ENCODE measurements at regions of chr16 and their contacts with region 1.

Region 1: DNA sequence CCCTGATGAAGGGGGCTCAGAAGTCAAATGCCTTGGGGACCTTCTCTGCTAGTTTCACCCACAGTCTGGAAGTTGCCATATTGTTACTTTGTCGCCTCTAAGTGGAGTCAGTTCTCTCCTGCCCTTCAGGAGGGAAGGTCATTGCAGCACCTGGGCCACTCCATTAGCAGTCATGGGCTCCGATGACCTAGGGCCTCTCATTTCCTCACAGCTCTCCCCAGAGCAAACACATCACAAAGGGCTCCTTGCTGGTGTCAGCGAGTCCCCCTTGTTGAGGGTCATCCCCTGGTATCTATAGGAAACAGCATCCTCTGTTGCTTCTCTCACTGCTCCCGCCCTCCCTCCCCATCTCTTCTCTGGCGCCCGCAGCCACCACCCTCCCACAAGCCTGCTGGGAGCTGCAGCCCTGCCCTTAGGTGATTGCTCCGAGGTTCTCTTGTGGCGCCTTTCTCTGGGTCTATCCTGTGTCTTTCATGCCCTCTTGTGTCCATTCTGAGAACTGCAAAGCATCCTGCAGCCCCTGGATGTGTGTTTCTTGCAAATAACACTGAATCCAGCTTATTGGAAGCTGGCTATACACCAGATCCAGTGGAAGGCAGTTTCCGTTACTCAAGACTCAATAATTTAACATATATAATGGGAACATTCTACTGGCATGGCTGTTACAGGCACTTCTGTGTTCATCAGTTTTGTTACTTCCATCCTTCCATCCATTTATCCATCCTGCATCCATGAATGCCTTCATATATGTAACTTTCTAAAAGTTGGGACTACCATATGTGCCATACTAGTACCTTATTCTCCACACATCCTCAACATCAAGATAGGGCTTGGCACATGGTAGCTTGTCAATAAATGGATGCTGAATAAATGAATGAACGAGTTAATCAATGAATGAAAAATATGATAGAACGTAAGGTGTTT is 21.2 kb downstream of the PDILT start:
- DNase-seq: peak; percentile 30
- H3K4me3 ChIP-seq: no peak overlapping the region
- H3K27ac ChIP-seq: no peak overlapping the region
- H3K27me3 ChIP-seq: no peaks in the 10 kb centered on the region
- CTCF ChIP-seq: peak; percentile 83

Region 2: DNA sequence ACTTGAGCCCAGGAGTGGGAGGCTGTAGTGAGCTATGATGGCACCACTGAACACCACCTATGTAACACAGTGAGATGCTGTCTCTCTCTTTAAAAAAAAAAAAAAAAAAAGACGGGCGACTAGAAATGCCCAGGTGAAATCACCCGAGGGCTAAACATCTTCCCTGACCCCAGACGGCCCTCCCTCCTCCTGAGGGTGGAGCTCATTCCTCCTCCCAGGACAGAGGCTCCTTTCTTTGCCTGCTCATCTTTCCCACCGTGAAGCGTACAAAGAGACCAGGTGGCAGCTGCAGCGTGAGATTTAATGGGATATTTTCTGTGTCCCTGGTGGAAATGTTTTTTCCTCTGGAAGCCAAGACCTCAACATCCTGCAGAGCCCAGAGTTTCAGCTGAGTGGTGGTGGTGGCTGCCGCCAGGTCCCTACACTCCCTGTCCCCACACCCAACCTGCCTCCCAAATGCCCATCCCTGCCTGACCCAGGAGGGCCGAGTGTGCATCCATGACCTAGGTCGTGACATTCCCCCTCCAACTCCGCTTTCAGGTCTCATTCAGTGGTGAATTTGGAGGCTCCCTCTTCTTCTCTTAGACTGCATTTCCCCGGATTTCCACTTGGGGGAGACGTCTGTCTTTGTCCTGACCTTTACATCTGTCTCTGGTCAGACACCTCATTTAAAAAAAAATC is 484.3 kb before region 1 on chr16:
- CTCF ChIA-PET with region 1: interaction called, 405 read pairs
- POLR2A ChIA-PET with region 1: no interaction called
- DNase-seq: no peak
- H3K4me3 ChIP-seq: no peak overlapping the region
- H3K27ac ChIP-seq: no peak overlapping the region
- H3K27me3 ChIP-seq: peaks cover 3% of the 10 kb centered on the region
- CTCF ChIP-seq: peak; percentile 87

Region 3: DNA sequence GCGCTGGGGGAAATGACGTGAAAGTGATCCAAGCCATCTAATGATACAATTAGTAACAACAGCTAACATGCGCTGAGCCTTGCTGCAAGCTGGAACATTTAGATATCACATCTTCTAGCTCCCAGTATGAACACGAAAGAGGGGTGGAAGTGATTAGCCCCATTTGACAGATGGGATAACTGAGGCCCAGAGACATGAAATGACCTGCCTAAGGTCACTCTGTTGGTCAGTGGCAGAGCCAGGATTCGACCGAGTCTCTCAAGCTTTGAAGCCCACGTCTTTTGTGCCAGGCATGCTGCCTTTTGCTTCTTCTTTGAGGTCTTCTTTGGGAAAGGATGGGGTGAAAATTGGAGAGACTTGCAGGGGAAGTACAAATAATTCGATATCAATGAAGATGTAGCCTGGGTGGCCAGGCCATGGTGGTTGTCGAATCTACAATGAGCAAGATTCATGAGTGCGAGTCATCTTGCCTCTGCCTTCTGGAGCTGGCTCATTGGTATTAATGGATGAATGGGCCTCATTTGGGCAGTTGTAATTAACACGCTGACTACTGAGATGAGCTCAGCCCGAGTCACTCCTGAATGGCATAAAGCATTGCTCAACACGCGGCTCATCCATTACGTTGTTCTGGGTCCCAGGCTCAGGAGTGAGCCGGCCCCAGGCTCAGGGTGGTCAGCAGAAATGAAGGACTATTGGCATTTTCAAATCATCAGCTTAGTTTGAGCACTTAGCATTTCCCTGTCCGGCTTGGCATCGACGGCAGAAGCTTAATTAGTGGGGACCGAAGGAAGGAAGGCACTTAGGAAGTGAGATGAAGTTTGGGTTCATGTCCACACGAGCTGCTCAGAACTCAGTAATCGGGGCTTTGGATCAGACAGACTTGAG is 470.7 kb before region 1 on chr16:
- CTCF ChIA-PET with region 1: interaction called, 405 read pairs
- POLR2A ChIA-PET with region 1: no interaction called
- DNase-seq: no peak
- H3K4me3 ChIP-seq: no peak overlapping the region
- H3K27ac ChIP-seq: no peak overlapping the region
- H3K27me3 ChIP-seq: no peaks in the 10 kb centered on the region
- CTCF ChIP-seq: no peak

Region 4: DNA sequence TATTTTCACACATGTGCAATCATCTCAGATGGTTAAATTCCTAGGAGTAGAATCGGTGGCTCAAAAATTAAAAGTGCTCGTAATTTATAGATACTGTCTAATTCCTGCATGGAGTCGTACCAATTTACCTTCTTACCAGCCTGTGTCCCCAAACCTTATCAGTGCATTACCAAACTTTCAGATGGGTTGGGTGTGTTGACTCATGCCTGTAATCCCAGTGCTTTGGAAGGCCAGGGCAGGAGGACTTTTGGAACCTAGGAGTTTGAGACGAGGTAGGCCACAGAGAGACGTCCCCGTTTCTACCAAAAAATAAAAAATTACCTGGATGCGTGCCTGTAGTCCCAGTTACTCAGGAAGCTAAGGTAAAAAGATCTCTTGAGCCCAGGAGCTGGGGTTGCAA is 464.2 kb before region 1 on chr16:
- CTCF ChIA-PET with region 1: interaction called, 11 read pairs
- POLR2A ChIA-PET with region 1: no interaction called
- DNase-seq: no peak
- H3K4me3 ChIP-seq: no peak overlapping the region
- H3K27ac ChIP-seq: no peak overlapping the region
- H3K27me3 ChIP-seq: no peaks in the 10 kb centered on the region
- CTCF ChIP-seq: no peak

Region 5: DNA sequence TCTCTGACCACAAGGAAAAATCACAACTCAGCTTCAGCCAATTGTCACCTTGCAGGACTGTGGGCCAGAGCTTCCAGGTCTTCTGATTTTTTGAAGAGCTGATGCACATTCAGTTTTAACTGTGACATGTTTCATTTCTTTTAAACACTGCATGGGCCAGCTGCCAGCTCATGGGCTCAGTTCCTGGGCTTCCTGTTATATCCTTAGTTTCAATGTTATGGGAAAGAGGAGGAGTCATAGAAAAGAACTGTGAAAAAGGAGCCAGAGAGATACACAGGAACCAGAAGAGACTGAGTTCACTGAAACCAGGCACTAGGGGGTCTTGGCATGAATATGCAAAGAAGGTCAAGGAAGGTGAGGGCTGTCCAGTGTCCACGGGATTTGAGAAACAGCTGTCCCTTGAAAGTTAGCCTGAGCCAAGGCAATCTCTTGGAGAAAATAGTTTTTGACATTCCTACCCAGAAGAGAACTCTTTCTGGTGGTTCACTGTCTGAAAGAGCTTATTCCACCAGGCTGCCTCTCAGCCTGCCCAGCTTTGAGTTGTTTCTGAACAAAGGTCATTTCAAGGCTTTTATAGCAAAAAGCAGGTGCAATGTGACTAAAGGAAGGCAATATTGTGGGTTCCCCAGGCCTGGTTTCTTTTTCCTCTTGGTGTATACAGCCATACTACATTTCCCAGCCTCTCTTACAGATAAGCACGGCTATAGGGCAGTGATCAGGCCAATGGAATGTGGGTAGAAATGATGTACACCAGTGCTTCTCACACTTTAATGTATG is 10.6 kb after region 1 on chr16:
- CTCF ChIA-PET with region 1: interaction called, 13 read pairs
- POLR2A ChIA-PET with region 1: no interaction called
- DNase-seq: no peak
- H3K4me3 ChIP-seq: no peak overlapping the region
- H3K27ac ChIP-seq: no peak overlapping the region
- H3K27me3 ChIP-seq: no peaks in the 10 kb centered on the region
- CTCF ChIP-seq: no peak

Measured in AG04450 (cell line).